ENCODE measurements at regions of chr4 and their contacts with region 1.

Region 1: GRCh38 chr4:41538017-41538733 is at the start of gene LIMCH1:
- DNase-seq: peak; percentile 62 to 91
- H3K4me3 ChIP-seq: peak within 1 kb of the TSS in 1 of 2 donors; percentile 54
- H3K27ac ChIP-seq: peak within 1 kb of the TSS; percentile 90 to 91
- H3K4me1 ChIP-seq: peaks cover 32 to 70% of the 10 kb centered on the region in 2 donors
- H3K27me3 ChIP-seq: no peaks in the 10 kb centered on the region
- CTCF ChIP-seq: no peak
- total RNA-seq, gene LIMCH1: 44.4 TPM

Region 2: DNA sequence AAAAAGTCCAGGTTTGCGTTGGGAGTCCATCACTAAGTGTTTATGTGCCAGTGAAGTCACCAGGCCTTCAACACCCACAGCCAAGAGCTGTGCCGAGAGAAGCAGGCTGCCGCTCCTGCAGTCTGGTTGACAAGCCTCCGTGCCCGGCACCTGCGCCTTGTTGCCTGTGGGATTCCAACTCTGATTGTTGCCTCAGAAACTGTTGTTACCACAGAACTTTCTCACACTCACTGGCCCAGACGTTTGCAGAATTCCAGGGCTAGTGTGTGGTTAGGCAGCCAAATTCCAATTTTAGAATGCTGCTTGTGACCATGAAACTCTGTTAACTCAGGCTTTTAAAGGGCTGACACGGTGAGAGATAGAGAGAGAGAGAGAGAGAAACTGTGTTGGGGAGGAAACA is 119.7 kb before region 1 on chr4:
- intact Hi-C with region 1: loop called (anchors 5 kb)
- DNase-seq: peak; percentile 29 to 83
- H3K4me3 ChIP-seq: peak overlapping the region in 1 of 2 donors; percentile 43
- H3K27ac ChIP-seq: peak overlapping the region; percentile 65 to 74
- H3K4me1 ChIP-seq: peaks cover 0 to 22% of the 10 kb centered on the region in 2 donors
- H3K27me3 ChIP-seq: no peaks in the 10 kb centered on the region
- CTCF ChIP-seq: no peak

Region 3: DNA sequence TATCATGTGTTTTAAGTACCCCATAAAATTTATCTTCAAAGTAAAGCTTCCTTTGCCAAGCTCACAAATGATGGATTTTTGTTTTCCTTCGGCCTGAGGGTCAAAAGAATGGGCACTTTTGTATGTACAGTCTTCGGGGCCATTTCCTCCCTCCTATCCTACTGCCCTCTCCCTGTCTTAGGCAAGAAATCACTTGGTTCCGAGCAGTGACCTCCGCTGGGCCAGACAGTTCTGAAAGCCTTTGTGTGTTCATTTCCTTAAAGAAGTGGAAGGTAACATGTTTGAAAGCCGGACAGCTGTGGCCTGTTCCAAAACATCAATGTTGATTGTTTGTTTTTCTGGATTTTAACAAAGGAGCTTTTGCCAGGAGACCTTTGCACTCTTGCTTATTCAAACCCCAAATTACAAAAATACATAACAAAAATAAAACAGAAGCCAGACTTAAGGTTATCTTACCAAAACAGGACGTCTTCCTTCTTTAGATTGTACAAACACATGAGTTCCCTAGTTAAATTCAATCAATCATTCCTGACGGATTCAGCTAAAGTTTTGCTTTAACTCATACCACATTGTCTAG is 110.8 kb before region 1 on chr4:
- intact Hi-C with region 1: loop called (anchors 5 kb)
- DNase-seq: no peak
- H3K4me3 ChIP-seq: no peak overlapping the region
- H3K27ac ChIP-seq: peak overlapping the region; percentile 73 to 78
- H3K4me1 ChIP-seq: peaks cover 16 to 61% of the 10 kb centered on the region in 2 donors
- H3K27me3 ChIP-seq: no peaks in the 10 kb centered on the region
- CTCF ChIP-seq: no peak

Region 4: GRCh38 chr4:41505161-41505661 is 33.0 kb before region 1 on chr4:
- intact Hi-C with region 1: loop called (anchors 2 kb)
- DNase-seq: peak; percentile 21 to 86
- H3K4me3 ChIP-seq: no peak overlapping the region
- H3K27ac ChIP-seq: peak overlapping the region; percentile 71 to 75
- H3K4me1 ChIP-seq: peaks cover 3 to 36% of the 10 kb centered on the region in 2 donors
- H3K27me3 ChIP-seq: no peaks in the 10 kb centered on the region
- CTCF ChIP-seq: no peak

Region 5: GRCh38 chr4:41569961-41570360 is 31.8 kb after region 1 on chr4:
- intact Hi-C with region 1: loop called (anchors 2 kb)
- DNase-seq: peak in 1 of 2 donors; percentile 77
- H3K4me3 ChIP-seq: no peak overlapping the region
- H3K27ac ChIP-seq: peak overlapping the region in 1 of 2 donors; percentile 35
- H3K4me1 ChIP-seq: peaks cover 4 to 59% of the 10 kb centered on the region in 2 donors
- H3K27me3 ChIP-seq: no peaks in the 10 kb centered on the region
- CTCF ChIP-seq: peak in 1 of 3 experiments; percentile 24

Region 6: DNA sequence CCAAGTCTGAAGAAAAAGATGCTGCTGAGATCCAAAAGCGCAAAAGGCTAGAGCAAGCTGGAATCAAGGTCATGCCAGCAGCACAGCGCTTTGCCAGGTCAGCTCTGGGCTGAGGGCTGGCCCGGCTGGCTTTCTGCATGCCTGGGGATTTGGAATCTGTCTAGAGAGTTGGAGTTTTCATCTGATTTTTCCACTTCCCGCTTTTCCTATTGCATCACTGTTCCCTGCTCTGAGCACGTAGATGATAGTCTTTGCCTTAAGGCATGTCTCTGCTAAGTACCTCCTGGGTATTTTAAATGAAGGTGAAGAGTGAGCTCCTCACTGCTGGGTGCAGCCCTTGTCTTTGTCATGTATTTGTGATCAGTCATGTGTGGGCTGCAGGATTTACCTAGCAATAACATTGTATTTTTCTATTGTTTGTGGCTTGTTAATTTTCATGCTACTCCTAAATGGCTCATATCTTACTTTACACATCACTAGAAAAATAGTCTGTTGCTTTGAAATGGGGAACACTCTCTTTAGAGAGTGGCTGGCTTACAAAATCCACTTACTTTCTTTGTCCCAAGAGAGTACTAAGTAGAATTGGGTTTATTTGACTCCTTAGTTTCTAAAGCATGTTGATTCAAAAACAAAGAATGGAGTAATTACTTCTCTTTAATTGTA is 82.5 kb after region 1 on chr4:
- intact Hi-C with region 1: loop called (anchors 5 kb)
- DNase-seq: peak in 1 of 2 donors; percentile 73
- H3K4me3 ChIP-seq: peak overlapping the region in 1 of 2 donors; percentile 12
- H3K27ac ChIP-seq: peak overlapping the region; percentile 72 to 76
- H3K4me1 ChIP-seq: peaks cover under 1 to 31% of the 10 kb centered on the region in 2 donors
- H3K27me3 ChIP-seq: no peaks in the 10 kb centered on the region
- CTCF ChIP-seq: no peak

Region 7: GRCh38 chr4:41632481-41633073 is 94.4 kb after region 1 on chr4:
- intact Hi-C with region 1: no loop called
- DNase-seq: no peak
- H3K4me3 ChIP-seq: no peak overlapping the region
- H3K27ac ChIP-seq: peak overlapping the region; percentile 47 to 67
- H3K4me1 ChIP-seq: peaks cover 11 to 13% of the 10 kb centered on the region in 2 donors
- H3K27me3 ChIP-seq: no peaks in the 10 kb centered on the region
- CTCF ChIP-seq: no peak

Region 8: DNA sequence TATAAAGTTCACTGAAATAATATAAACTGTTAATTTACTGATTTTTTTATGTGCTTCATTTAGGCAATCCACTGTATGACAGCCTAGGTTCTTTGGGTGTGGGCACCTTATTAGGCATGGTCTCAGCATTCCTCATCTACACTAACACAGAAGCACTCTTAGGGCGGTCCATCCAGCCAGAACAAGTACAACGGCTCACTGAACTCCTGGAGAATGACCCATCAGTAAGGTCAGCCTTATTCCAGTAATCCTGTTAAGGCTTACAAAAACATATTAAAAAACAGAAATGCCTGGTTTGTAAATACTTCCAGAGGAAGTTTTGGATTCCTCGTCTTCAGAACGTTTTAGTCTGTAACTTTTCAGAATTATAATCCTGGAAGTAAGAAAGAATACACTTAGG is 532.3 kb after region 1 on chr4:
- intact Hi-C with region 1: no loop called
- DNase-seq: no peak
- H3K4me3 ChIP-seq: no peak overlapping the region
- H3K27ac ChIP-seq: no peak overlapping the region
- H3K4me1 ChIP-seq: no peaks in the 10 kb centered on the region
- H3K27me3 ChIP-seq: no peaks in the 10 kb centered on the region
- CTCF ChIP-seq: no peak